Activated CD8-positive, alpha-beta memory T cell treated with anti-CD3 and anti-CD28 coated beads, Interleukin-2, amount 10 ng/mL, durations not matched to agents 7 days and 5 days (primary cell): ENCODE measurements at regions of chr7 and their contacts with region 1.

Region 1: DNA sequence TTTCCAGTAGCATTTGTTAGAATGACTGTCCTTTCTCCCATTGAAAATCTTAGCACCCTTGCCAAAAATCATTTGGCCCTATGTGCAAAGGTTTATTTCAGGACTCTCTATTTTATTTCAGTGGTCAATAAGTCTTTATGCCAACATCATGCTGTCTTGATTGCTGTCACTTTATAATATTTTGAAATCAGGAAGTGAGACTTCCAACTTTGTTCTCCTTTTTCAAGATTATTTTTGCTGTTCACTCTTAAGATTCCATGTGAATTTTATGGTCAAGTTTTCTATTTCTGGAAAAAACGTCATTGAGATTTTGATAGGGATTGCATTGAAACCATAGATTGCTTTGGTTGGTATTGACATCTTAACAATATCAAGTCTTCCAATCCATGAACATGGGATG is 65.1 kb downstream of the PAXIP1 start:
- DNase-seq: no peak
- ATAC-seq: no peak
- H3K4me3 Mint-ChIP-seq: no peak overlapping the region
- H3K27ac Mint-ChIP-seq: no peak overlapping the region
- H3K4me1 Mint-ChIP-seq: no peaks in the 10 kb centered on the region
- H3K27me3 Mint-ChIP-seq: no peaks in the 10 kb centered on the region

Region 2: GRCh38 chr7:154953006-154953684 is 15.3 kb after region 1 on chr7:
- CTCF ChIA-PET with region 1: interaction called, 13 read pairs
- DNase-seq: peak; percentile 64
- ATAC-seq: no peak
- H3K4me3 Mint-ChIP-seq: no peak overlapping the region
- H3K27ac Mint-ChIP-seq: no peak overlapping the region
- H3K4me1 Mint-ChIP-seq: no peaks in the 10 kb centered on the region
- H3K27me3 Mint-ChIP-seq: no peaks in the 10 kb centered on the region

Region 3: GRCh38 chr7:155870334-155871180 is 932.7 kb after region 1 on chr7:
- CTCF ChIA-PET with region 1: no interaction called
- DNase-seq: peak; percentile 22
- ATAC-seq: no peak
- H3K4me3 Mint-ChIP-seq: no peak overlapping the region
- H3K27ac Mint-ChIP-seq: no peak overlapping the region
- H3K4me1 Mint-ChIP-seq: no peaks in the 10 kb centered on the region
- H3K27me3 Mint-ChIP-seq: peaks cover 3% of the 10 kb centered on the region